PC-3 (cell line): ENCODE measurements at regions of chr14 and their contacts with region 1.

Region 1: DNA sequence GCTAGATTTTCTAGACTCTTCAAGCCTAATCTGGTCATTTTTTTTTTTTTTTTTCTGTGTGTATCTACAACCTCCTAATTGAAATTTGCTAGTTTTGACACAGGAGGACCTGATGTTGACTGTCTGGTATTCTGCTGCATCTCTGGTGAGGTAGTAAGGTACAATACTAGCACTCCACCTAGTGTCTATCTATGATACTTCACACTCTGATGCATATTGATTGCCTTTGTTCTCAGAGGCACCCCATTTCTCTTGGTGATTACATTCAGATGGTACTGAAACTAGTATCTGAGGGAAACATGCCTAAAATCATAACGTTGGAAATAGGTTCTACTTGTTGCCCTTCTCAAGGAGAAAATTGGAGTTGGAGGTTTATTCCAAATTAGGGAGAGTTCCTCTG is 930.5 kb upstream of the NOVA1 start:
- DNase-seq: peak; percentile 57
- ATAC-seq: peak; percentile 96
- H3K4me3 ChIP-seq: no peak overlapping the region
- H3K27ac ChIP-seq: no peak overlapping the region
- H3K4me1 ChIP-seq: no peaks in the 10 kb centered on the region
- H3K27me3 ChIP-seq: no peaks in the 10 kb centered on the region
- CTCF ChIP-seq: peak; percentile 83

Region 2: DNA sequence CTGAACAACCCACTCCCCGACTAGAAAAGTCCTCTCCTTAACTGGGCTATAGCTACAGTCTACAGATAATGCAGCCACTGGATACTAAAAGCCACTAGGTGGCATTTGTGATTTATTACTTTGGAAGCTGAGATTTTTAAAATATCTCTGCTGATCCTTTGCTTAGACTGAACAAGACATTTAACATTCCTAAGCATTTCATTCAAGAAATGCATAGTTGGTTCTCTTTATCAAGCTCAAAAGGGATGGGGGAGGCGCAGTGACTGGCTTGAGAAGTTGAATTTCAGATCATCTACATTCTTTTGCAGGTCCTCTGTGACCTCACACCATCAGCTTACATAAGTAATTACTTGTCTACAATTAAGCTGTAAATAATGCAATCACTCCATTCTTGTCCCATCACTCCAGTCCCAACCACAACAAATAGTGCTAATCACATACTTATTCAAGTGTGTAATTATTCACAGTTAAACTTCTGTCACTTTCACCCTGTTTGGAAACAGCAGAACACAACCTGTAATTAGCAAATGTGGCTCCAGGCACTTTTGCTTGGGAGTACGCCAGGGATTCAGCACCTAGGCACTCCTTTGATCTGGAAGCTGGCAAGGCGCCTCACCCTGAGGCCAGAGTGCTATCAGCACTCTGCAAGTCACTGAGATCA is 1134.0 kb before region 1 on chr14:
- CTCF ChIA-PET with region 1: no interaction called
- POLR2A ChIA-PET with region 1: no interaction called
- intact Hi-C with region 1: loop called (anchors 2 kb)
- DNase-seq: peak; percentile 59
- ATAC-seq: peak; percentile 69
- H3K4me3 ChIP-seq: no peak overlapping the region
- H3K27ac ChIP-seq: no peak overlapping the region
- H3K4me1 ChIP-seq: peaks cover 9% of the 10 kb centered on the region; the same call in 1 of the 2 replicates
- H3K27me3 ChIP-seq: no peaks in the 10 kb centered on the region
- CTCF ChIP-seq: peak; percentile 68

Region 3: GRCh38 chr14:26984311-26985177 is 543.8 kb before region 1 on chr14:
- CTCF ChIA-PET with region 1: no interaction called
- POLR2A ChIA-PET with region 1: no interaction called
- intact Hi-C with region 1: loop called (anchors 2 kb)
- DNase-seq: peak; percentile 78
- ATAC-seq: peak; percentile 90
- H3K4me3 ChIP-seq: no peak overlapping the region
- H3K27ac ChIP-seq: no peak overlapping the region
- H3K4me1 ChIP-seq: no peaks in the 10 kb centered on the region
- H3K27me3 ChIP-seq: peaks cover 19% of the 10 kb centered on the region
- CTCF ChIP-seq: peak; percentile 93

Region 4: GRCh38 chr14:27184427-27184826 is 343.9 kb before region 1 on chr14:
- CTCF ChIA-PET with region 1: no interaction called
- POLR2A ChIA-PET with region 1: no interaction called
- intact Hi-C with region 1: loop called (anchors 10 kb)
- DNase-seq: peak; percentile 40
- ATAC-seq: peak; percentile 98
- H3K4me3 ChIP-seq: no peak overlapping the region
- H3K27ac ChIP-seq: no peak overlapping the region
- H3K4me1 ChIP-seq: peaks cover 4% of the 10 kb centered on the region; the same call in 1 of the 2 replicates
- H3K27me3 ChIP-seq: no peaks in the 10 kb centered on the region; the same call in 1 of the 2 replicates
- CTCF ChIP-seq: no peak

Region 5: DNA sequence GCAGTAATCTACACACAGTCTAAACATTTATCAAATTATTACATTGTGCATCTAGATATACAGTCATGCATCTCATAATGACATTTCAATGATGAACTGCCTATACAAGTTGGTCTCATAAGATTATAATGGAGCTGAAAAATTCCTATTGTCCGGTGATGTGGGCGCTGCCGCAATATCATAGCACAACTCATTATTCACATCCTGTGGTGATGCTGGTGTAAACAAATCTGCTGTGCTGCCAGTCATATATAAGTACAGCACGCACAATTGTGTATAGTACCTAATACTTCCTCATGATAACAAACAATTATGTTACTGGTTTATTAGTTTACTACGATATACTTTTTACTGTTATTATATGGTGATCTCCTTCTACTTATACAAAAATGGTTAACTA is 161.7 kb before region 1 on chr14:
- CTCF ChIA-PET with region 1: no interaction called
- POLR2A ChIA-PET with region 1: no interaction called
- intact Hi-C with region 1: no loop called
- DNase-seq: peak; percentile 64
- ATAC-seq: peak; percentile 97
- H3K4me3 ChIP-seq: no peak overlapping the region
- H3K27ac ChIP-seq: peak overlapping the region; percentile 41
- H3K4me1 ChIP-seq: peaks cover 6% of the 10 kb centered on the region; the same call in 1 of the 2 replicates
- H3K27me3 ChIP-seq: no peaks in the 10 kb centered on the region
- CTCF ChIP-seq: no peak

Region 6: DNA sequence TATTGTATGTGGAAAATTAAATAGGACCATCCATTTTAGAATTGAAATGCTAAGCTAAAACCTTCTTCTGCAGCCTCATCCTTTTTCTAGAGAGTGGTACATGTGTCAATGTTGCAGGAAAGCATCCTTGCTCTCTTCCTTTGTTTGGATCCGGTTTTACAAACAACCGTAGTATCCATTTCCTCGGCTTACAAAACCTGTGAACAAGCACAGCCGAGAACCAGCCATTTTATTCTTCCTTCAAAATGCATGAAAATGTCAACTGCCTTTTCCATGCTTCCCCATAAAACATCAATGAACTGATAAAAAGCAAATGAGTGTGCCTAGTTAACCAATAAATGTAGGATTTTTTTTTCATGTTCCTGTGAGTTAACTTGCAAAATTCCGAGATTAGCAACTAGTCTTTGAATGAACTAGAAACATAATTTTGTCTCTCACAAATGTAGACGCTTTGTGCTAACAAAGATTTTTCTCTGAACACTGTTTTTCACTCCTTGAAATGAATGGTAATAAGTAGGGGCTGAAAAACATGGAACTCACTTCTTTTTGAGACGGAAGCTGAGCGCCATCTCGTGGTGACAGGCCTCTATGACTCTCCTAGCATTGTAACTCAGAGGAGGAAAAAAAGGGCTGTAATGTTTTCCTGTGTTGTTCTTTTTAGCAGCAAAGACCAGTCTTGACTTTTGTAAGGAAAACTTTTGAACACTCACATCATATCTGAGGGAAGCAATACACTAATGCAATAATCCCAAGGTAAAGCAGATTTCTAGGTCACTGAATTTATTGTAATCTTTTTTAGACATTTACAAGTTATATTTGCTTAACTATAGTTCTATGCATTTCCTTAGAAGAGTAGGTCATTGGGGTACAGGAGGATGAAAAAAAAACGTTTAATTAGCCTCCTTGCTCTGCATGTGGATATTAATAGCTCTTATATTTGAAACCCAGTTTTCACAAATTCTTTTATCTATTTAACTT is 1080.8 kb after region 1 on chr14:
- CTCF ChIA-PET with region 1: no interaction called
- POLR2A ChIA-PET with region 1: no interaction called
- intact Hi-C with region 1: loop called (anchors 1 kb)
- DNase-seq: peak; percentile 82
- ATAC-seq: peak; percentile 80
- H3K4me3 ChIP-seq: no peak overlapping the region
- H3K27ac ChIP-seq: no peak overlapping the region
- H3K4me1 ChIP-seq: peaks cover 5% of the 10 kb centered on the region; the same call in 1 of the 2 replicates
- H3K27me3 ChIP-seq: no peaks in the 10 kb centered on the region
- CTCF ChIP-seq: peak; percentile 97